Activated CD4-positive, alpha-beta T cell treated with anti-CD3 and anti-CD28 coated beads, Interleukin-2, amount 10 ng/mL, durations not matched to agents 24 days and 14 days (primary cell): ENCODE measurements at regions of chr18 and their contacts with region 1.

Region 1: DNA sequence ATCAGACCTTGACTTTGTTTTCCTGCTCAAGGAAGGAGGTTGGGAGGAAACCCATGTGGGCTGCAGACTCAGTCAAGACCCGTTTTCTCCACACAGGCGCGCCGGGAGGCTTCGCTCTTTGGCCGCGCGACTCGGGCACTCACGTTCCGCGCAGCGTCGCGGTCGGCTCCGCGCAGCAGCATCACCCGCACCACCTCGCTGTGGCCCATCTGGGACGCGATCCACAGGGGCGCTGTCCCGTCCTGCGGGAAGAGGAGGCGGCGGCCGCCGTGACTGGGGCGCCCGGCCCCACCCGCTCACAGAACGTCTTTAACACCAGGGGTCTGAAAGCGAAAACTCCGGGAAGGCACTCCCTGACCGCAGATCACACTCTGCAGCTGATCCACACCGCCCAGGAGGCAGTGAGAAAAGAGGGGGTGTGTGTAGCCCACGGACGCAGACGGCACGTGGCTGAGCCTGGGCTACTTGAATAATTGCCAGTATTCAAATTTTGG is 33.1 kb upstream of the NPC1 start:
- DNase-seq: peak; percentile 65
- H3K4me3 Mint-ChIP-seq: peak overlapping the region; percentile 39
- H3K27ac Mint-ChIP-seq: no peak overlapping the region
- H3K4me1 Mint-ChIP-seq: peaks cover 13% of the 10 kb centered on the region
- H3K27me3 Mint-ChIP-seq: peaks cover 50% of the 10 kb centered on the region

Region 2: GRCh38 chr18:23812546-23813440 is 193.4 kb after region 1 on chr18:
- intact Hi-C with region 1: loop called (anchors 1 kb)
- DNase-seq: no peak
- H3K4me3 Mint-ChIP-seq: no peak overlapping the region
- H3K27ac Mint-ChIP-seq: no peak overlapping the region
- H3K4me1 Mint-ChIP-seq: peaks cover 20% of the 10 kb centered on the region
- H3K27me3 Mint-ChIP-seq: peaks cover 28% of the 10 kb centered on the region